GM12878 (cell line): ENCODE measurements at regions of chr6 and their contacts with region 1.

Region 1: DNA sequence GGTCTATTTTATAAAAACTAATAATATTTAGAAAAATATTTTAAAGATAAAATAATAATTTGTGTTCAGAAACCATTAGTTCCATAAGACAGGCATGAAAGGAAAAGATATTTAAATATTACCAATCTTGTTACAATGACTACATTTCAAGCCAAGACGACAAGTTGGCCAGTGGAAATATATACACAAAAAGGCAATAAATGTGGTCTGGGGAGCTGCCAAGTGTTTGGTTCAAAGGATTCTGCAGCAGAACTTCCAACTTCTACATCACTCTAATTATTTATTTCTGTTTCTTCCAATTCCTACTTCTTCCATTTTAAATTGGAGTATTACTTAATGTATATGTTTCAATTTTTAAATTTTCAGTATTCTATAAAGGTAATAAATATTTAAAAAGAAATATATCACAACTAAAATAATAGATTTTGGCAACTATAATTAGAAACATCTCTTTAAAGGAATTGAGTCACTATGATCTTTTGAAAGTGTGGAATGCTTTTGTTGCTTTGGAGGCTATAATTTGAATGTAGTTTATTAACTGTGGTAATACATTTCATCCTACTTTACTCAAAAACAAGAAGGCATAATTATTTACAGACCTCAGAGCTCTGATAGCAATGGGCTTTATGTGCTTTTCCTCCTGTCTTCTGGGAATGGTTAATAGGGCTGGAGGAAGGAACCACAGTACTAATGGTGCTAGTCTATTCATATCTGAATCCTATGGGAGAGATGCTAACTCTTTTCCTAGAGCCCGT is 129.7 kb upstream of the FAM184A start:
- DNase-seq: no peak
- ATAC-seq: no peak
- H3K4me3 ChIP-seq: no peak overlapping the region
- H3K27ac ChIP-seq: no peak overlapping the region
- H3K4me1 ChIP-seq: peaks cover 2% of the 10 kb centered on the region; the same call in 1 of the 2 replicates
- H3K27me3 ChIP-seq: no peaks in the 10 kb centered on the region
- CTCF ChIP-seq: no peak
- EP300 ChIP-seq: no peak
- POLR2A ChIP-seq: no peak
- RAD21 ChIP-seq: no peak

Region 2: DNA sequence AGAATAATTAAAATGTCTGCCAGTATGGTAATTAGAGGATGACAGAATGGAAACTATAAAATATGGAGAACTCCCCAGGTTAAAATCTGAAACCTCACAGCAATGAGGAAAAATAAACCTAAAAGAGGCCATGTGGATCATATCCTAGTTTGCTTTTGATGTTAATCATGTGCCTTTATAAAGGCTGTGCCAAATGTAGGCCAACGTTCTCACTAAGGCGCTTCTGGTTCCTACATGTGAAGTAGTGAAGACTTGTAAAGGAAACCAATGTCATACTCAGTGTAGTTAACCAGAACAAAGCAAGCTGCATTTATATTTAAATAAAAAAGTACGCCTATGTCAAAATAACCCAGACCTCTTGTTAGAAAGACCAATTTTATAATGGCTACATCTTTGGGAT is 15.9 kb before region 1 on chr6:
- CTCF ChIA-PET with region 1: interaction called, 4 read pairs
- POLR2A ChIA-PET with region 1: interaction called, 3 read pairs
- RAD21 ChIA-PET with region 1: no interaction called
- SMC1A ChIA-PET with region 1: interaction called, 10 read pairs
- in situ Hi-C with region 1: no loop called
- intact Hi-C with region 1: no loop called
- DNase-seq: no peak
- ATAC-seq: no peak
- H3K4me3 ChIP-seq: no peak overlapping the region
- H3K27ac ChIP-seq: no peak overlapping the region
- H3K4me1 ChIP-seq: no peaks in the 10 kb centered on the region
- H3K27me3 ChIP-seq: no peaks in the 10 kb centered on the region
- CTCF ChIP-seq: no peak
- EP300 ChIP-seq: no peak
- POLR2A ChIP-seq: no peak
- RAD21 ChIP-seq: no peak

Region 3: GRCh38 chr6:119224095-119224701 is 16.1 kb after region 1 on chr6:
- CTCF ChIA-PET with region 1: interaction called, 3 read pairs
- POLR2A ChIA-PET with region 1: interaction called, 3 read pairs
- RAD21 ChIA-PET with region 1: interaction called, 8 read pairs
- SMC1A ChIA-PET with region 1: interaction called, 34 read pairs
- in situ Hi-C with region 1: no loop called
- intact Hi-C with region 1: no loop called
- DNase-seq: no peak
- ATAC-seq: no peak
- H3K4me3 ChIP-seq: no peak overlapping the region
- H3K27ac ChIP-seq: no peak overlapping the region
- H3K4me1 ChIP-seq: no peaks in the 10 kb centered on the region
- H3K27me3 ChIP-seq: no peaks in the 10 kb centered on the region
- CTCF ChIP-seq: no peak
- EP300 ChIP-seq: no peak
- POLR2A ChIP-seq: no peak
- RAD21 ChIP-seq: no peak